Sigmoid colon (tissue), 7 donors: ENCODE measurements at regions of chr12 and their contacts with region 1.

Region 1: DNA sequence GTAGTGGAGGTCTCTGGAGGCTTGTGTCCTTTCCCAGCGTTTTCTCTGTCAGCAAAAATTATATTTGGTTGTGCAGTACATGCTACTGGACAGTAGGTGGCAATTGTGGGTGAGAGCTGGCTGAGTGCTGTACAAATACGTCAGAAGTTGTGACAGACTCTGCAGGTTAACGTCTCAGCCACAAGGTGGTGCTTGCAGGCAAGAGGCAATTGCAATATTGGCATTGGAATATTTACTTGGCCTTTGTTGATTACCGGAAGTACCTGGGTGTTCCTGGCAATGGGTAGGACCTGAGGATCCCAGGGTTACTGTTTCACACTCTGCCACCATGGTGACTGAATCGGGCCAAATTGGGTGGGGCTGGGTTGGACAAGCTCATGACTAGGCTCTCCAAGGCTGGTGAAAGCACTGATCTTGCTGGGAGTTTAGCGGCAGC is 333.9 kb upstream of the LMO3 start:
- DNase-seq: no peak
- H3K4me3 ChIP-seq: no peak overlapping the region
- H3K27ac ChIP-seq: no peak overlapping the region
- H3K4me1 ChIP-seq: no peaks in the 10 kb centered on the region
- H3K27me3 ChIP-seq: no peaks in the 10 kb centered on the region
- CTCF ChIP-seq: peak in 1 of 4 experiments; percentile 60
- EP300 ChIP-seq: no peak
- POLR2A ChIP-seq: no peak

Region 2: DNA sequence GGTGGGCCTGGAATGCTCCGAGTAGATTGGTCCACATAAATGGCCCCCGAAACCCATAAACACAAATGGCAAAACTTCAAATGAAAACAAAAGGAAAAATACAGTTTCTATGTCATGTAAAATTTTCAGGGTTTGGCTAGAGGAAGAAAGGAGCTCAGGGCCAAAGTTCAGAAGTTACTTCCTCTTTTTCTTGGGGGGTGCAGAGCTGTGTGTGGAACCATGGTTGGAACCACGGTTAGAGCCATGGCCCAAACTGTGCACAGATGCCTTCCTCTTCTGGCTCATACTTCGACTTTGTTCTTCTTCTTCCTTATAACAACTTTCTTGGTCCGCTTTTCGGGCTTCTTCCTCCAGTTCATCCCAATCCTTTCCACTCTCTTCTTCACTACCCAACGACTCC is 540.8 kb before region 1 on chr12:
- intact Hi-C with region 1: loop called (anchors 5 kb)
- DNase-seq: no peak
- H3K4me3 ChIP-seq: no peak overlapping the region
- H3K27ac ChIP-seq: no peak overlapping the region
- H3K4me1 ChIP-seq: no peaks in the 10 kb centered on the region
- H3K27me3 ChIP-seq: no peaks in the 10 kb centered on the region
- CTCF ChIP-seq: no peak
- EP300 ChIP-seq: no peak
- POLR2A ChIP-seq: no peak